T-cell (primary cell): ENCODE measurements at regions of chr7 and their contacts with region 1.

Region 1: DNA sequence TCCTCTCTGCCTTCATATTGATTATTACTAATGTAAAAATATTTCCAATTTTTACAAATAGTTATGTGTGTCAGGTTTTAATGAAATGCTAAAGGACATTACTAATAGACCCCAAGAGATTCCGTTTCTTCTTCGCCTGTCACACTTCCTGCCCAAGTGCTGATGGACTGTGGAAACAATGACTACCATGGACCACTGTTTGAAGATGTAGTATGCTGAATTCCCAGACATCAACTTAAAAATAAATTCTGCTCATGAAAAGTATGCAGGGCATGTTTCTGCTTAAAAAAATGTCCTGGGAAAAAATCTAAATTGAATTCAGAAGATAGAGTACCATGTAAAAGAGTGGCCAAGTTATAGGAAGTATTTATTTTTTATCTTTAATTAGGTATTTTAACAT is 52.1 kb downstream of the ST7 start:
- DNase-seq: no peak
- ATAC-seq: no peak
- H3K4me3 ChIP-seq: no peak overlapping the region
- H3K4me3 Mint-ChIP-seq: no peak overlapping the region
- H3K27ac ChIP-seq: no peak overlapping the region
- H3K27ac Mint-ChIP-seq: no peak overlapping the region
- H3K4me1 ChIP-seq: peaks cover 25 to 47% of the 10 kb centered on the region in 2 experiments
- H3K4me1 Mint-ChIP-seq: peaks cover 40 to 46% (median 45%) of the 10 kb centered on the region in 3 donors
- H3K27me3 ChIP-seq: no peaks in the 10 kb centered on the region
- H3K27me3 Mint-ChIP-seq: no peaks in the 10 kb centered on the region

Region 2: DNA sequence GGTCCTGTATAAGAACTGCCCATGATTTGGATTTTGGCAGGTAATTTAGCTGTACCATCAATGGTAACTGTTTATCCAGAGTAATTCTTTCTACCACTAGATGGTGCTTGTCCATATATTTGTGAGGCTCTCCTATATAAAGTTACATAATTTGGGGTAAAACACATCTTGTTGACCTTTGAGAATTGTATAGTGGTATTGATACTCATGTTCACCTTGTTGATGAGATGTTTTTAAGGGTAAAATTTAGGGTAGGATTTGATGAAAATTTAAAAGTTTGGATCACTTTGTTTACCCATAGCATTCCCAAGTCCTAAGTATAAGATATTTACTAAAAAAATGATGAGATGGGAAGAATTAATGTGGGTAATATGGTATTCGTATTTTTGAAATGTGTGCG is 20.5 kb before region 1 on chr7:
- CTCF ChIA-PET with region 1: interaction called, 10 to 12 read pairs
- POLR2A ChIA-PET with region 1: interaction called in 1 of 2 experiments, 3 read pairs
- DNase-seq: peak in 1 of 35 experiments; percentile 62
- ATAC-seq: peak in 2 of 4 experiments; percentile 59 to 66
- H3K4me3 ChIP-seq: no peak overlapping the region
- H3K4me3 Mint-ChIP-seq: no peak overlapping the region
- H3K27ac ChIP-seq: no peak overlapping the region
- H3K27ac Mint-ChIP-seq: no peak overlapping the region
- H3K4me1 ChIP-seq: no peaks in the 10 kb centered on the region
- H3K4me1 Mint-ChIP-seq: peaks cover 2 to 4% (median 3%) of the 10 kb centered on the region in 3 donors
- H3K27me3 ChIP-seq: no peaks in the 10 kb centered on the region
- H3K27me3 Mint-ChIP-seq: no peaks in the 10 kb centered on the region